ENCODE measurements at regions of chr12 and their contacts with region 1.

Region 1: GRCh38 chr12:22443379-22444316 is 100.7 kb downstream of the C2CD5 start:
- DNase-seq: peak; percentile 82
- H3K4me3 ChIP-seq: no peak overlapping the region
- H3K27ac ChIP-seq: no peak overlapping the region
- H3K4me1 ChIP-seq: no peaks in the 10 kb centered on the region
- H3K27me3 ChIP-seq: no peaks in the 10 kb centered on the region
- CTCF ChIP-seq: peak; percentile 14 to 79 (median 75)
- POLR2A ChIP-seq: no peak

Region 2: GRCh38 chr12:22083167-22083566 is 360.5 kb before region 1 on chr12:
- intact Hi-C with region 1: loop called (anchors 2 kb)
- DNase-seq: peak; percentile 20
- H3K4me3 ChIP-seq: no peak overlapping the region
- H3K27ac ChIP-seq: no peak overlapping the region
- H3K4me1 ChIP-seq: no peaks in the 10 kb centered on the region
- H3K27me3 ChIP-seq: no peaks in the 10 kb centered on the region
- CTCF ChIP-seq: peak; percentile 16 to 75 (median 64)
- POLR2A ChIP-seq: no peak

Region 3: DNA sequence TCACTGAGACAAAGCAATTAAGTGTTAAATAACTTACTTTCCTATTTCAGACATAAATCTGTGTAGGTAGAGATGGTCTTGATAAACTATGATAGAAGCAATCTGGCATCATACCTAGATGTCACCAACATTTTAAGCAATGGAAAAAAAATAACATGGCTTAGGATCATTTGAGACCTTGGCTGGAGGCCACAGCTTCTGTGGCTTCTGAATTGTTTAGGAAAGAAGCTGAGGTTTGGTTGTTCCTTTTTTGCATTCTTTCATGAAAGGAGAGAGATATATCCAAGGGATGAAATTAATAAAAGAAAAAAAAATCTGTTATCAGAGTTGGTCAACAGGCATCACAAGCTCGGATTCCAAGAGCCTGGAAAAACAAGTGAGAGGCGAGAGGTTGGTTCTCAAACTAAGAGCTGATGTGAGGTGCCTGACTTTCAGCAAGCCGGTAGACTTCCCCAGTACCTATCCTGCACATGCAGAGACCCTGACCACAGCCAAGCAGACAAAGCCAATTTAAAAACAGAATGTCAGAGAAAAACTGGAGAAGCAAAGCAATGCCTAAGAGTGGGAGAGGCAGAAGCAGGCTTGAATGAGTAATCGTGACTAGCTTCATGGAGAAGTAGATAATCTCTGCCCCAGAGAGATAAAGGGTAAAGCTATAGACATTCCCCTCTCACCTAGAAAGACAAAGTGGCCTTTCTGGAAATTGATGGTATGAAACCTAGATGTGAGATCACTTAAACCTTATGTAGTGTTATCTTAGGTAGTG is 65.7 kb before region 1 on chr12:
- intact Hi-C with region 1: loop called (anchors 10 kb)
- DNase-seq: no peak
- H3K4me3 ChIP-seq: no peak overlapping the region
- H3K27ac ChIP-seq: no peak overlapping the region
- H3K4me1 ChIP-seq: no peaks in the 10 kb centered on the region
- H3K27me3 ChIP-seq: no peaks in the 10 kb centered on the region
- CTCF ChIP-seq: no peak
- POLR2A ChIP-seq: no peak